PC-9 (cell line): ENCODE measurements at regions of chr9 and their contacts with region 1.

Region 1: DNA sequence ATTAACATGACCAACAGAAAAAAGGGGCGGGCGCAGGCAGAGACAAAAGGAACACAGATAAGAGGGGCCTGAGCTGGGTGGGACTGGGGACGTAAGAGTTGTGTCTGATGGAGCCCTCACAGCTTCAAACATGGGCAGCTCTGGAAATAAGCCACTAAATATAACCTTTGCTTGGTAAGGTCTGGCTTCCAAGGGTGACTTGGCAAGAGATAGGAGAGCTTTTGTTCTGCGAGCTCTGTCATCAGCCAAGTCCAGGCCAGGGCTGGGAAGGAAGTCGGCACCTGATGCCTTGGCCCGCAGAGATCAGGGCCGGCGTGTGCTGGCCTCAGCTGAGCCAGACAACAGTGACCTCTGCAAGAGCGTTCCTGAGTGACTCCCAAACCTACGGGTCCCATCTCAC is 11.8 kb downstream of the TRUB2 start:
- DNase-seq: no peak
- H3K4me3 ChIP-seq: no peak overlapping the region
- H3K27ac ChIP-seq: no peak overlapping the region
- H3K4me1 ChIP-seq: peaks cover 32% of the 10 kb centered on the region
- H3K27me3 ChIP-seq: no peaks in the 10 kb centered on the region
- CTCF ChIP-seq: no peak

Region 2: DNA sequence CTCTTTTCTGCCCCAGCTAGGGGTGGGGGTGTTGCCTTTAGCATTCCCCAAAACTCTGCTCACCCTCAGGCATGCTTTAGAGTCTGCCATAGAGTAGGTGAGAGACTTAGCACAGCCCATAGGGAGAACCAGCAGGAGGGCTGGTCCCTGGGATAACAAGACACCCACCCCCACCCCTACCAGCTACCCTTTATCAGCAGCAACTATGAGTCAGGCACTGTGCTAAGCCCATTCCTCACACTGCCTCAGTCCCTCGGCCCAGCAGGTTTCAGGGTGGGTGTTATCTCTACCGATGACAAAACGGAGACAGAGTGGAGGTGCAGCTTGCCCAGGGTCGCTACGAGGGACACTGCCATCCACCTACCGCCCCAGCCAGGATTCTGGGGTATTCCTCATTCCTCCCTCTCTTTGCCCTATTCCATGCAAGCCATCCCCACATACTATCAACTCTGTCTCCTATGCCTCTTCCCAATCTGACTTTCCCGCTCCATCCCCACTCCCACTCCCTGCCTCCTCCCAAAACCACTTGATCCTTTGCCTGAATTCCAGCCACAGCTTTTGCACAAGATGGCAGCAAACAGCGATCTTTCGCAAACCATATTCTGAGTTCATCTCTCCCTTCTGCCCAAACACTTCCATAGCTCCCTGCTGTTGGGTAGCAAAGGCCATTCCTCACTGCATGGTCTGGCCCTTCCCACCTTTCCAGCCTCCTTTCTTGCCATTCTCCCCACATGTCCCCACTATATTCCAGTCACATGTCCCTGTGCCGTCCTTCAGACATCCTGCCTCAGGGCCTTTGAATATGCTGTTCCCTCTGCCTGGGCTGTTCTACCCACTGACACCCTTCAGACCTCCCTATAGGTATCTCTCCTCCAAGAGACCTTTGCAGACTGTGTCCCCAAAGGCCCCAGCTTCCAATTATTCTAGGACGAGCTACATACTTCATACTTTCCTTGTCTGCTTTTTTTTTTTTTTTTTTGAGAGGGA is 124.2 kb before region 1 on chr9:
- CTCF ChIA-PET with region 1: no interaction called
- POLR2A ChIA-PET with region 1: interaction called, 18 read pairs
- intact Hi-C with region 1: no loop called
- DNase-seq: no peak
- H3K4me3 ChIP-seq: no peak overlapping the region
- H3K27ac ChIP-seq: no peak overlapping the region
- H3K4me1 ChIP-seq: peaks cover 8% of the 10 kb centered on the region; the same call in 1 of the 2 replicates
- H3K27me3 ChIP-seq: no peaks in the 10 kb centered on the region
- CTCF ChIP-seq: no peak